ENCODE measurements at regions of chr1 and their contacts with region 1.

Region 1: GRCh38 chr1:182301467-182302198 is 90.0 kb downstream of the GLUL start:
- DNase-seq: peak in 2 of 5 donors; percentile 26 to 56
- H3K4me3 ChIP-seq: no peak overlapping the region
- H3K27ac ChIP-seq: peak overlapping the region in 1 of 2 donors; percentile 10
- H3K4me1 ChIP-seq: peaks cover 15% of the 10 kb centered on the region
- H3K27me3 ChIP-seq: no peaks in the 10 kb centered on the region
- CTCF ChIP-seq: no peak
- EP300 ChIP-seq: no peak
- POLR2A ChIP-seq: no peak

Region 2: DNA sequence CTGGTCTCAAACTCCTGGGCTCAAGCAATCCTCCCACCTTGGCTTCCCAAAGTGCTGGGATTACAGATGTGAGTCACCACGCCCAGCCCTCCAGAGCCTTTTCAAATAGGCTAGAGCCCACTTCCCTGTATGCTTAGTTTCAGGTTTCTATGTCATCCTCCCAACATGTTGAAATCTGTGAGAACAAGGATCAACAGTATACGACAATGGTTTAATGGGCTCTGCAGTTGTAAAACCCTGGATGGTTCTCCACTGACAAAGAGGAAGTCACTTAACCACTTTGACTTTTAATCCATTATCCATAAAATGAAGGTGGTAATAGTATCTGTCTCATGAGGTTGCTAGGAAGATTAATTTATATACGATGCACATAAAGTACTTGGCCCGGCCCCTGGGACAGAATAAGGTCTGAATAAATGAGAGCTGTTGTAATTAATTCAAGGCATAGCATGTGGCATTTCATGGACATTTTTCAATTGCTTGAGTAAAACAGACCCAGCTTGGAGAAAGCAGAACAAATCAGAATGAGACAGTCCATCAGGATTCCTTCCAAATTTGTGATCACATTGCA is 126.2 kb before region 1 on chr1:
- intact Hi-C with region 1: loop called in 1 of 4 experiments (anchors 10 kb)
- DNase-seq: no peak
- H3K4me3 ChIP-seq: no peak overlapping the region
- H3K27ac ChIP-seq: no peak overlapping the region
- H3K4me1 ChIP-seq: peaks cover 8% of the 10 kb centered on the region
- H3K27me3 ChIP-seq: no peaks in the 10 kb centered on the region
- CTCF ChIP-seq: no peak
- EP300 ChIP-seq: no peak
- POLR2A ChIP-seq: no peak

Region 3: GRCh38 chr1:182206626-182207239 is 94.9 kb before region 1 on chr1:
- intact Hi-C with region 1: loop called in 1 of 4 experiments (anchors 5 kb)
- DNase-seq: peak; percentile 79 to 92 (median 87)
- H3K4me3 ChIP-seq: no peak overlapping the region
- H3K27ac ChIP-seq: peak overlapping the region; percentile 47 to 86
- H3K4me1 ChIP-seq: peaks cover 19% of the 10 kb centered on the region
- H3K27me3 ChIP-seq: no peaks in the 10 kb centered on the region
- CTCF ChIP-seq: no peak
- EP300 ChIP-seq: peak; percentile 89
- POLR2A ChIP-seq: peak; percentile 31

Region 4: DNA sequence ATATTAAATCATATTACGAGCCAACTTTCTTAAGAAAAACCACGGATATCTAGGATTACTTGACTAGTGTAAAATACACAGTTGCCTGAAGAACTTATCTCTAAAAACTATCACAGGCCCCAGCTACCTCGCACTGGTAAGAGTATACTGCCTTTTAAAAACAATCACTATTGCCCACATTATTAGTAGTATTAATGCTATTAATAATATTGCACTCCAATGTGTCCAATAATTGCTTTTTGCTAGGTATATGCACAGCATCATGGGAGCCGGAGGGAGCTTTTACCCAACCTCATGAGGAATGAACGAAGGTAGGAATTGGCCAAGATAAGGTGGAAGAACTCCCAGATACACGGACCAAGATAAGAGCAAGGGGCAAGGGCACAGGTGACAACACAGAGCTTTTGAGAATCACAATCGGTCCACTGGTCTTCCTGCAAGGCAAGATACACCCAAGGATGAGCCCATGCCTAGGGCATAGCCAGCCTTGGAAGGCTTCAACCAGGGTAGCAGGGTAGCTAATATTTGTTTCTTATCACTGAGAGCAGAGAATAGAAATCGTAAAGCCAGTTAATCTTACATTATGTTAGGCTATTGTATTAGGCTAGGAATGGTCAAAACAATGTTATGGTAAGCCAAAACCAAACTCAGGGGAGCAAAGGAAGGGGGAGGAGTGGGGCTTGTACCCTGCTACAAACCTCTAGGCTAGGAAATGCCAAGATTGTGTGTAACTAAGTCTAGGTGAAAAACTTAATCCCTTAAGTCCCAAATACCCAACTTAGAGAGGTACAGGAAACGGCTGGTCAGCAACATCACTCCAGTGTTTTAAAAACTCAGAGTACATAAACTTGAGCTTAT is 80.6 kb after region 1 on chr1:
- intact Hi-C with region 1: loop called in 1 of 4 experiments (anchors 5 kb)
- DNase-seq: no peak
- H3K4me3 ChIP-seq: no peak overlapping the region
- H3K27ac ChIP-seq: no peak overlapping the region
- H3K4me1 ChIP-seq: peaks cover 4% of the 10 kb centered on the region
- H3K27me3 ChIP-seq: no peaks in the 10 kb centered on the region
- CTCF ChIP-seq: no peak
- EP300 ChIP-seq: no peak
- POLR2A ChIP-seq: no peak

Measured in ovary (tissue), 10 donors.